IMR-90 (cell line): ENCODE measurements at regions of chr7 and their contacts with region 1.

Region 1: DNA sequence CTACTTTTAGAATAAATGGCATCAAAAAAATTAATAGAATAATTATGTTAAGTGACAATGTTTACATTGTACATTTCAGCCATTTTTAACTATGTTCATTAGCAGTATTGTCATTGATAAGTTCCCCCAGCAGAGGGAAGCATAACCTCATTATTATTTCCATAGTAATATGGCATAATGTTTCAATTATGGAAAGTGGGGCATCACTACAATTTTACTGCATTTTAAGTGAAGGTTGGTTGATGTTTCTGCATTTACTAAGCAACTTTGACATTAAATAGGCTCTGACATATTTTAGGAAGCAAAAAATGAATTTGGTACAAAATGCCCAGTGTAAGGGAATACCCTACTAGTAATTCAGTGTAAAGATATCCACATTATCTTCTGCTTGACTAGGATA is 218.3 kb downstream of the SEMA3A start:
- DNase-seq: peak; percentile 44
- ATAC-seq: peak; percentile 60
- H3K4me3 ChIP-seq: no peak overlapping the region
- H3K27ac ChIP-seq: no peak overlapping the region
- H3K4me1 ChIP-seq: no peaks in the 10 kb centered on the region
- H3K27me3 ChIP-seq: no peaks in the 10 kb centered on the region
- CTCF ChIP-seq: peak; percentile 68
- POLR2A ChIP-seq: no peak
- RAD21 ChIP-seq: peak; percentile 81

Region 2: GRCh38 chr7:83866582-83866981 is 109.7 kb before region 1 on chr7:
- CTCF ChIA-PET with region 1: no interaction called
- POLR2A ChIA-PET with region 1: no interaction called
- dilution Hi-C with region 1: no loop called
- in situ Hi-C with region 1: no loop called
- intact Hi-C with region 1: no loop called
- DNase-seq: no peak
- ATAC-seq: no peak
- H3K4me3 ChIP-seq: no peak overlapping the region
- H3K27ac ChIP-seq: no peak overlapping the region
- H3K4me1 ChIP-seq: no peaks in the 10 kb centered on the region
- H3K27me3 ChIP-seq: no peaks in the 10 kb centered on the region
- CTCF ChIP-seq: no peak
- POLR2A ChIP-seq: no peak
- RAD21 ChIP-seq: no peak

Region 3: DNA sequence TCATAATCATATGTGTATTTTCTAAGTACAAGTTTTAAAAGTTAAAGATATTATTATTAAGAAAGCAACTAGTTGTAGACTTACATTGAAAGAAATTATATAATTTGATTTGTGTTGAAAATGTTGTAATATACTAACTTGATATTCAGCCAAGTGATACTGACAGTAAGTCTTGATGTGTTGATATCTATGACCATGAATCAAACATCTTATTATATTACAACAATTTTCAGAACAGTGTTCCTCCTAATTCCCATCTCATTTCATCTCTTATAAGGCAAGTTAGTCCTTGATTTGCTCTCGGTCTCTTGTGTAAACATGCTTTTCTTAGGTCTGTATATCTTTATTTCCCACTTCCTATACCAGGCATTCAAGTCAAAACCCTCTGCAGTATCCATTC is 58.2 kb before region 1 on chr7:
- CTCF ChIA-PET with region 1: no interaction called
- POLR2A ChIA-PET with region 1: no interaction called
- dilution Hi-C with region 1: no loop called
- in situ Hi-C with region 1: no loop called
- intact Hi-C with region 1: no loop called
- DNase-seq: no peak
- ATAC-seq: no peak
- H3K4me3 ChIP-seq: no peak overlapping the region
- H3K27ac ChIP-seq: no peak overlapping the region
- H3K4me1 ChIP-seq: no peaks in the 10 kb centered on the region
- H3K27me3 ChIP-seq: no peaks in the 10 kb centered on the region
- CTCF ChIP-seq: no peak
- POLR2A ChIP-seq: no peak
- RAD21 ChIP-seq: no peak

Region 4: GRCh38 chr7:83936056-83936708 is 40.1 kb before region 1 on chr7:
- CTCF ChIA-PET with region 1: no interaction called
- POLR2A ChIA-PET with region 1: no interaction called
- dilution Hi-C with region 1: no loop called
- in situ Hi-C with region 1: no loop called
- intact Hi-C with region 1: loop called (anchors 2 kb)
- DNase-seq: peak; percentile 81
- ATAC-seq: peak; percentile 95
- H3K4me3 ChIP-seq: no peak overlapping the region
- H3K27ac ChIP-seq: no peak overlapping the region
- H3K4me1 ChIP-seq: no peaks in the 10 kb centered on the region
- H3K27me3 ChIP-seq: no peaks in the 10 kb centered on the region
- CTCF ChIP-seq: peak; percentile 93
- POLR2A ChIP-seq: no peak
- RAD21 ChIP-seq: peak; percentile 95

Region 5: DNA sequence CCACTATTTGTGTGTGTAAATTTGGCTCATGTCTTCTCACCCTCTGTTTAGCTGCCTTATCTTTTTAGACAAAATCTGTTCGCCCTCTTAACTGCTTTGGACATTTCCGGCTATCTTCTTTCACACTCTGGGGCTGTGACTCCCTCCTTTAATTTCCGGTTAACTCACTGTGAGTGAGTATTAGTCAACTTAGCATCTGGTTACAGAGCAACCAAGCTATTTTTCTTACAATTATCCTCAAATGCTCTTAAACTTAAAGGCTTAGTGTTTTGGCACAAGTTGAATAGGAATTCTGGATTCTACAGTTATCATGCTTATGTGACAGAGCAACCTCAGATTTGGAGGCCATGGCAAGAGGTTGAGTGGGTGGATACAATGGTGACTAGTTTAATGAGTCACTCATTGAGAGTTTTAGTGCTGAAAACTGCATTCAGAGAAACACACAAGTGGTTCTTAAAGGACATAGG is 395.9 kb after region 1 on chr7:
- CTCF ChIA-PET with region 1: no interaction called
- POLR2A ChIA-PET with region 1: no interaction called
- dilution Hi-C with region 1: no loop called
- in situ Hi-C with region 1: no loop called
- intact Hi-C with region 1: loop called (anchors 10 kb)
- DNase-seq: peak; percentile 98
- ATAC-seq: peak; percentile 95
- H3K4me3 ChIP-seq: peak overlapping the region; percentile 4; the same call in 1 of the 2 replicates
- H3K27ac ChIP-seq: no peak overlapping the region; the same call in 1 of the 2 replicates
- H3K4me1 ChIP-seq: peaks cover 10% of the 10 kb centered on the region; the same call in 1 of the 2 replicates
- H3K27me3 ChIP-seq: no peaks in the 10 kb centered on the region
- CTCF ChIP-seq: no peak
- POLR2A ChIP-seq: no peak
- RAD21 ChIP-seq: no peak; the same call in 1 of the 2 replicates

Region 6: DNA sequence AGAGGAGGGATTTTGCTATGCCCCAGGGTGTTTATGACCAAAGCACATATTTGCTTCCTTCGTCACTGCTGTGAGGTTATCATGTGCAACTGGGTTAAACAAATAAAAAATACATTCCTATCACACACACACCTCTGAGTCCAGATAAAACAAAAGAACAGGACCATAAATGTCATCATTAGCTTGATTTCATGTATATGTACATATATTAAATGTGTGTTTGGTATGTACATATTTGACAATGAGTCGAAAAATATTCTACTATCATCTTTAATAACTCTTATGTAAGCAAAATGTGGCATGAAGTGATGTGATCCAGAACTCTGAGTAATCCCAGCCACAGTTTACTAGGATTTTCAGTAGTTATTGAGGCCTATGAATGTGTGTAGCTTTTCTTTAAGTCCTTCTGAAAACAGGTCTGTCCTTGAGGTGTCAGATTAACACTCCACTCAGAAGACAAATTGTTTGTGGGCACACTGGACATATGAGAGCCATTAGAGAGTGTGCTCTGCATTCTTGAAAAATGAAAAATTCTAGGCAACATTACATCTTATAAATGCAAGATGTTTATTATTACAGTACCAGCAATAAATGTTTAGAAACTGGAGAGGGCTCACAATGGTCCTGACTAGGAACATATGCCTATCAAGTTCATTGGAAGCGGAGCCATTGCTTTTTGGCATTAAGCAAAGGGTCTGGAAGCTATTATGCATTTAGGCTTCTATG is 553.3 kb after region 1 on chr7:
- CTCF ChIA-PET with region 1: no interaction called
- POLR2A ChIA-PET with region 1: no interaction called
- dilution Hi-C with region 1: no loop called
- in situ Hi-C with region 1: no loop called
- intact Hi-C with region 1: loop called (anchors 5 kb)
- DNase-seq: peak; percentile 83
- ATAC-seq: peak; percentile 81
- H3K4me3 ChIP-seq: no peak overlapping the region
- H3K27ac ChIP-seq: no peak overlapping the region
- H3K4me1 ChIP-seq: peaks cover 4% of the 10 kb centered on the region
- H3K27me3 ChIP-seq: no peaks in the 10 kb centered on the region
- CTCF ChIP-seq: no peak
- POLR2A ChIP-seq: no peak
- RAD21 ChIP-seq: no peak

Region 7: GRCh38 chr7:85023045-85023712 is 1046.9 kb after region 1 on chr7:
- CTCF ChIA-PET with region 1: no interaction called
- POLR2A ChIA-PET with region 1: no interaction called
- dilution Hi-C with region 1: no loop called
- in situ Hi-C with region 1: no loop called
- intact Hi-C with region 1: loop called (anchors 1 kb)
- DNase-seq: peak; percentile 58
- ATAC-seq: no peak
- H3K4me3 ChIP-seq: no peak overlapping the region
- H3K27ac ChIP-seq: no peak overlapping the region
- H3K4me1 ChIP-seq: no peaks in the 10 kb centered on the region
- H3K27me3 ChIP-seq: no peaks in the 10 kb centered on the region
- CTCF ChIP-seq: peak; percentile 78
- POLR2A ChIP-seq: no peak
- RAD21 ChIP-seq: peak; percentile 91